G401 (cell line): ENCODE measurements at regions of chr1 and their contacts with region 1.

Region 1: GRCh38 chr1:111873460-111874030 is 115.9 kb downstream of the KCND3 start:
- DNase-seq: no peak

Region 2: DNA sequence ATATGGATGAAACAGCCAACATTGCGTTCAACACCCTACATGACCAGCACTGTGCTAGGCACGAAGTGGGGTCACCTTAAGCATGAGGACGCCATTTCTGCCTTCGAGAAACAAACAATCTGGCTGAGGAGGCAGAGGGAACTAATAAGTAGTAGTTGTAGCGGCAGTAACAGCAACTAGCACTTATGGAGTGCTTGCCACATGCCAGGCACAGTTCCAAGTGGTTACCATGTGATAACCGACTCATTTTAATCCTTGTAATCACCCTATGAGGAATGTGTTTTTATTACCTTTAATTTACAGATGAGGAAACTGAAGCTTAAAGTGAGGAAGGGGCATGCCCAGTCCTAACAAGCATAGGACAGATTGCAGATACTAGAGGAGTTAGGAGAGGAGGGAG is 82.2 kb after region 1 on chr1:
- in situ Hi-C with region 1: loop called (anchors 5 kb)
- DNase-seq: no peak

Region 3: DNA sequence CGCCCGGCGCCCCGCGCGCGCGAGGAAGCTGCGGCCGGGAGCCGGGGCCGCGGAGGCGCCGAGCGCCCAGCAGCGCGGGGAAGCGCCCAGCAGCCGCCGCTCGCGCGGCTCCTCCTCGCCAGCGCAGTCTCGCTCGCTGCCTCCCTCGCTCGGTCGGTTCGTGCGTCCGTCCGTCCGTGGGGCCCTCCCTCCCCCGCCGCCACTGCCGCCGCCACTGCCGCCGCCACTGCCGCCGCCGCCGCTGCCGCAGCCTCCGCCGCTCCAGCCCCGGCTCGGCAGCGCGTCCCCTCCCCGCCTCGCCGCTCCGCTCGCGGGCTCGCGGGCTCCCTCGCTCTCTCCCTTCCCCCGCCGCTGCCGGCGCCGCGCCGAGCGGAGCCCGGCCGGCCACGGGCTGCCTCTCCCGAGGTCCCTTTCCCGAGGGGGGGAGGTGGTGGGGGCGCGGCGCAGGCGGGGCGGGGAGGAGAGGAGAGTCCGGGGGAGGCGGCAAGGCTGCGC is 116.0 kb after region 1 on chr1 and contains the start of gene KCND3:
- in situ Hi-C with region 1: no loop called
- DNase-seq: peak; percentile 34
- total RNA-seq, gene KCND3: 0.10 TPM in 1 of 2 replicates, not detected in the other